ENCODE measurements at regions of chr17 and their contacts with region 1.

Region 1: GRCh38 chr17:81440876-81441244 is 45.6 kb downstream of the BAHCC1 start:
- DNase-seq: peak; percentile 98
- H3K4me3 ChIP-seq: no peak overlapping the region; a peak in 1 of 4 replicates
- H3K27ac ChIP-seq: no peak overlapping the region
- H3K4me1 ChIP-seq: peaks cover 0 to 29% of the 10 kb centered on the region in 2 experiments; a peak in 1 of 4 replicates
- H3K27me3 ChIP-seq: no peaks in the 10 kb centered on the region
- CTCF ChIP-seq: peak; percentile 81
- EP300 ChIP-seq: no peak
- RAD21 ChIP-seq: peak; percentile 77

Region 2: DNA sequence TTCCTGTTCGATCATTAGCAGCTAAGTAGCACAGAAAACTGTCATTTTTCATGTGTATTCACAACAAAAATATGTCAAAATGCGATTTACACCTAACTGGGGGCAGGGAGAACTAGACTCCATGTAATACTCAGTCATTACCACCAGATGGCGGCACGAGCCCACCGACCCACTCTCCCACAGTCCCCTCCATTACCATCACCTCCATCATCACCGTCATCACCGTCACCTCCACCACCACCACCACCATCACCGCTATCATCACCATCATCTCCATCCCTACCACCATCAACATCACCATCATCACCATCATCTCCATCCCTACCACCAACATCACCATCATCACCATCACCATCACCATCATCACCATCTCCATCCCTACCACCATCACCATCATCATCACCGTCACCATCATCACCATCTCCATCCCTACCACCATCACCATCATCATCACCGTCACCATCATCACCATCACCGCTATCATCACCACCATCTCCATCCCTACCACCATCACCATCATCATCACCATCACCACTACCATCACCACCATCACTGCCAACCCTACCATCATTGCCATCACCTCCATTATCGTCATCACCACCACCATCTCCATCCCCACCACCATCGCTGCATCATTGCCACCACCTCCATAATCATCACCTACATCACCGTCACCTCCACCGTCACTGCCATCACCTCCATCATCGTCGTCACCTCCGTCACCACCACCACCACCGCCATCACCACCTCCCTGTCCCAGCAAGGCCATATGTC is 187.3 kb before region 1 on chr17:
- CTCF ChIA-PET with region 1: interaction called, 12 read pairs
- POLR2A ChIA-PET with region 1: no interaction called
- DNase-seq: peak; percentile 92
- H3K4me3 ChIP-seq: peak overlapping the region in 1 of 2 experiments; percentile 21; a peak in 1 of 4 replicates
- H3K27ac ChIP-seq: no peak overlapping the region; a peak in 1 of 4 replicates
- H3K4me1 ChIP-seq: peaks cover 0 to 38% of the 10 kb centered on the region in 2 experiments; a peak in 1 of 4 replicates
- H3K27me3 ChIP-seq: no peaks in the 10 kb centered on the region
- CTCF ChIP-seq: peak; percentile 92
- EP300 ChIP-seq: no peak
- RAD21 ChIP-seq: peak; percentile 99

Region 3: GRCh38 chr17:81309070-81309905 is 131.6 kb before region 1 on chr17:
- CTCF ChIA-PET with region 1: interaction called, 13 read pairs
- POLR2A ChIA-PET with region 1: interaction called, 4 read pairs
- DNase-seq: peak; percentile 84
- H3K4me3 ChIP-seq: no peak overlapping the region
- H3K27ac ChIP-seq: peak overlapping the region in 1 of 2 experiments; percentile 99; a peak in 2 of 4 replicates
- H3K4me1 ChIP-seq: peaks cover 0 to 87% of the 10 kb centered on the region in 2 experiments; a peak in 2 of 4 replicates
- H3K27me3 ChIP-seq: peaks cover 6% of the 10 kb centered on the region; the same call in 1 of the 2 replicates
- CTCF ChIP-seq: peak; percentile 50
- EP300 ChIP-seq: no peak
- RAD21 ChIP-seq: peak; percentile 46

Region 4: DNA sequence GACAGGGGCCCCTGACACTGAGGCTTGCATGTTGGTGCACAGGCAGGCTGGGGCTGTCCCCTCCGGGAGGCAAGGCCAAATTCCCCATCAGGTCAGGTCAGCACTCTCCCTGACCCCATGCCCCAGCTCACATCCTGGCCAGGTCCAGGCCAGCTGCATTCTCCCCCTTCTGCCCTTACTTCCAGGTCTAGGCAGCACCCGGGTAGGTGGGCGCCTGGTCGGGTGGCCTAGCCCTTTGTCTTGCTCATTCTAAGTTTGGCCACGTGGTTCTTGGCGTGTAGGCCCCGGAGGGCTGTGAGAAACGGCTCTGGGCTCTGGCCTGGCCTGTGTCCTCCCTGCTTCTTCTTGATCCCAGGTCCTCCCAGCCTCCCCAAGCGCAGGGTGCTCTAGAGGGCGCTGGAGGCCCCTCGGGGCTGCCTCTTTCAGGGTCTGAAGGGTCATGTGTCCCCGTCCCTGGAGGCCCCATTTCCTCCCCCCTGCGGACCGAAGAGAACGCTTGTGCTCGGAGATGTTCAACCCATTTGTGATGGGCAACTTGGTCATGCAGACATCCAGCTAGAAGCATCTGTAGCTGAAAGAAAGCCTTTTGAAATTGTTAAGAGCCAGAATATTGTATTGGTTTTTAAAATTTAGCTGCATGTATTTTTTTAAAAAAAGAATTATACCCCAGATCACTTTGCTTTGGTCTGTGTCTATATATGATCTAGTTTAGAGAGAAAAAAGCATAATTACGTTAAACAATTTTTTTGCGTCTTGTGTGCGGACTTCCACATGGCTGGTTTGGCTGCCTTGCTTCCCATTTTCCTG is 38.9 kb before region 1 on chr17:
- CTCF ChIA-PET with region 1: interaction called, 23 read pairs
- POLR2A ChIA-PET with region 1: interaction called, 14 read pairs
- DNase-seq: peak; percentile 81
- H3K4me3 ChIP-seq: no peak overlapping the region
- H3K27ac ChIP-seq: no peak overlapping the region; a peak in 1 of 4 replicates
- H3K4me1 ChIP-seq: peaks cover 56 to 73% of the 10 kb centered on the region in 2 experiments
- H3K27me3 ChIP-seq: no peaks in the 10 kb centered on the region
- CTCF ChIP-seq: peak; percentile 63
- EP300 ChIP-seq: no peak
- RAD21 ChIP-seq: peak; percentile 47

Region 5: GRCh38 chr17:81453712-81454111 is 12.9 kb after region 1 on chr17:
- CTCF ChIA-PET with region 1: interaction called, 85 read pairs
- POLR2A ChIA-PET with region 1: no interaction called
- DNase-seq: no peak
- H3K4me3 ChIP-seq: no peak overlapping the region
- H3K27ac ChIP-seq: no peak overlapping the region
- H3K4me1 ChIP-seq: peaks cover 0 to 12% of the 10 kb centered on the region in 2 experiments; a peak in 1 of 4 replicates
- H3K27me3 ChIP-seq: no peaks in the 10 kb centered on the region
- CTCF ChIP-seq: no peak
- EP300 ChIP-seq: no peak
- RAD21 ChIP-seq: no peak

Region 6: DNA sequence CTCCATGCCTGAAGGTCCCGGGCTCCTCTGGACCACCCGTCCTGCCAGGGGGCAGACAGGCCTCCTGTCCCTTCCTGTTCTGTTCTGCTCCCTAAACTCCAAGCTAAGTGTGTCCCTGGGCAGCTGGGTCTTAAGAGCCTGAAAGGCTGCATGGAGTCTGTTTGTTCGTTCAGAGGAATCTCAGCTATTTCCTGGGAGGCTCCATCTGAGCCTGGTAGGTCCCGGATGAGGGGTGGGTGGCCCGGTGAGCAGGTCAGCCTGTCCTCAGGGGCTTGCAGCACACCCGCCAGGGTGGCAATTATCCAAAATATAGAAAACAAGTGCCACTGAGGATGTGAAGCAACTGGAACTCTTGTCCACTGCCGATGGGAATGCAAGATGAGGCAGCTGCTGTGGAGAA is 59.2 kb after region 1 on chr17:
- CTCF ChIA-PET with region 1: no interaction called
- POLR2A ChIA-PET with region 1: no interaction called
- DNase-seq: no peak
- H3K4me3 ChIP-seq: no peak overlapping the region
- H3K27ac ChIP-seq: no peak overlapping the region
- H3K4me1 ChIP-seq: no peaks in the 10 kb centered on the region; a peak in 1 of 4 replicates
- H3K27me3 ChIP-seq: no peaks in the 10 kb centered on the region
- CTCF ChIP-seq: no peak
- EP300 ChIP-seq: no peak
- RAD21 ChIP-seq: no peak

Region 7: GRCh38 chr17:81553018-81553615 is 112.3 kb after region 1 on chr17:
- CTCF ChIA-PET with region 1: interaction called, 11 read pairs
- POLR2A ChIA-PET with region 1: no interaction called
- DNase-seq: peak; percentile 90
- H3K4me3 ChIP-seq: peak overlapping the region; percentile 78 to 89
- H3K27ac ChIP-seq: peak overlapping the region; percentile 81 to 90
- H3K4me1 ChIP-seq: peaks cover 25 to 26% of the 10 kb centered on the region in 2 experiments; a peak in 3 of 4 replicates
- H3K27me3 ChIP-seq: no peaks in the 10 kb centered on the region
- CTCF ChIP-seq: peak; percentile 17; the same call in 1 of the 2 replicates
- EP300 ChIP-seq: peak in 1 of 2 experiments; percentile 24; a peak in 1 of 4 replicates
- RAD21 ChIP-seq: peak; percentile 17

Region 8: DNA sequence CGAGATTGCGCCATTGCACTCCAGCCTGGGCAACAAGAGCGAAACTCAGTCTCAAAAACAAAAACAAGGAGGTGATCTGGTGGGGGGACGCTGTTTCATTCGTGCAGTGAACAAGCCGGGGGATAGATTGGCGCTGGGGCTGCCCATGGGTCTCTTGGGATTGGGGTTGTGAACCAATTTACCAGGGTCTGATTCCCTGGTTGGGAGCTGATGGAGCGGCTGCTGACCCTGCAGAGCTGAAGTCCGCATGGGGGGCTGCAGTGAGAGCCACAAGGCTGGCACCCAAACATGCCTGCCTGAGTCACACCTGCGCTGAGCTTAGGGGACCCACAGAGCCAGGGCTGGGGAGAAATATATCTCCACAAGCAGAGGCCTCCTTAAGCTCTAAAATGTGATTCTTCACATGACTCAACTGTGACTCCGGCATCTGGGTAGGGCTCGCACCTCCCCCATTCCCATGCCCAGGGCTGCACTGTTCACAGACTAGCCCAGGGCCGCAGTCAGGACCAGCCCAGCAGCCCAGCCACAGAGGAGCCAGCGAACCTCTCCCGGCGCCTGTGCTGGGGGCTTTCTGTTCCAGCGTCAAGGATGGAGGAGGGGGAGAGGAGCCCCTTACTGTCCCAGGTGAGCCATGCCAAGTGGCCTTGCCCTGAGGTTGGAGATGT is 201.1 kb after region 1 on chr17:
- CTCF ChIA-PET with region 1: no interaction called
- POLR2A ChIA-PET with region 1: no interaction called
- DNase-seq: no peak
- H3K4me3 ChIP-seq: peak overlapping the region in 1 of 2 experiments; percentile 8; a peak in 1 of 4 replicates
- H3K27ac ChIP-seq: peak overlapping the region in 1 of 2 experiments; percentile 63; a peak in 2 of 4 replicates
- H3K4me1 ChIP-seq: peaks cover 0 to 11% of the 10 kb centered on the region in 2 experiments; a peak in 2 of 4 replicates
- H3K27me3 ChIP-seq: no peaks in the 10 kb centered on the region
- CTCF ChIP-seq: no peak
- EP300 ChIP-seq: no peak
- RAD21 ChIP-seq: no peak

Measured in SK-N-SH (cell line).